SK-N-SH (cell line): ENCODE measurements at regions of chr9 and their contacts with region 1.

Region 1: DNA sequence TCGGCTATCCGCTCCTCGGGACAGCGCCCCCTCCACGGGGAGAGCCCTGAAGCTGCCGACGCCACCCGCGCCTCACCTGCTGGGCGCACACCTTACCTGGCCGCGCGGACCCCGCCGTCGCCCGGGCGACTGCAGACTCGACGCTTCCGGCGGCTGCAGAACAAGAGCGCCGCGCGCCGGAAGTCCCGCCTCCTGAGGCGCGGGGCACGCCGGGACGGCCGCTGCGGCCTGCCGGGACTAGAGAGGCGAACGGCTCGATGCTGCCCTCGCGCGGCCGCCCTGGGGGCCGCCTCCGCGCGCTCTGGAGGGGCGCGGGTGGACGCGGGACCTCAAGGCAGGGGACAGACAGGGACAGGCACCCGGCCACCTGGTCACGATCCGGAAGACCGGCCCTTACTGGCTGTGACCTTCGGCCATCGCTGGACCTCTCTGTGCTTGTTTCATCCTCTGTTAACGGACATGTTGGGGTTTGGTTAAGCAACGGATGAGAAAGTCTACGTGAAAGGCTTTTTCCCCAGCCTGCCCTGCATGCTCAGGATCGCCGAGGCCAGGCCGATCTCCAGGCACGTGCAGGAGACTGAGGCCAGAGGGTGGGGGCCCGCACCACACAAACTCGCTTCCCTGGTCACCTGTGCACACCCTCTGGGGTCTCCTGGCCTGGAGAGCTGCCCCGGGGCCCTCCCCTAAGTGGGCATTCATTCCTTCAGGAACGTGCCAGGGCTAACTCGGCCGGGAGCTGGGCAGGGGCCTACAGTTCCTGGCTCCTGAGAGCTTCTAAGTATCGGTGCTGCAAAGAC is at the start of gene SNAPC4:
- DNase-seq: peak; percentile 99
- H3K4me3 ChIP-seq: peak within 1 kb of the TSS; percentile 85 to 99
- H3K27ac ChIP-seq: peak within 1 kb of the TSS; percentile 30 to 73; a peak in 2 of 4 replicates
- H3K4me1 ChIP-seq: peaks cover 3 to 19% of the 10 kb centered on the region in 2 experiments; a peak in 2 of 4 replicates
- H3K27me3 ChIP-seq: no peaks in the 10 kb centered on the region
- CTCF ChIP-seq: peak; percentile 82
- EP300 ChIP-seq: peak in 1 of 2 experiments; percentile 19; a peak in 1 of 4 replicates
- RAD21 ChIP-seq: peak; percentile 76
- polyA plus RNA-seq, gene SNAPC4: 7.7 and 9.2 TPM in 2 replicates

Region 2: DNA sequence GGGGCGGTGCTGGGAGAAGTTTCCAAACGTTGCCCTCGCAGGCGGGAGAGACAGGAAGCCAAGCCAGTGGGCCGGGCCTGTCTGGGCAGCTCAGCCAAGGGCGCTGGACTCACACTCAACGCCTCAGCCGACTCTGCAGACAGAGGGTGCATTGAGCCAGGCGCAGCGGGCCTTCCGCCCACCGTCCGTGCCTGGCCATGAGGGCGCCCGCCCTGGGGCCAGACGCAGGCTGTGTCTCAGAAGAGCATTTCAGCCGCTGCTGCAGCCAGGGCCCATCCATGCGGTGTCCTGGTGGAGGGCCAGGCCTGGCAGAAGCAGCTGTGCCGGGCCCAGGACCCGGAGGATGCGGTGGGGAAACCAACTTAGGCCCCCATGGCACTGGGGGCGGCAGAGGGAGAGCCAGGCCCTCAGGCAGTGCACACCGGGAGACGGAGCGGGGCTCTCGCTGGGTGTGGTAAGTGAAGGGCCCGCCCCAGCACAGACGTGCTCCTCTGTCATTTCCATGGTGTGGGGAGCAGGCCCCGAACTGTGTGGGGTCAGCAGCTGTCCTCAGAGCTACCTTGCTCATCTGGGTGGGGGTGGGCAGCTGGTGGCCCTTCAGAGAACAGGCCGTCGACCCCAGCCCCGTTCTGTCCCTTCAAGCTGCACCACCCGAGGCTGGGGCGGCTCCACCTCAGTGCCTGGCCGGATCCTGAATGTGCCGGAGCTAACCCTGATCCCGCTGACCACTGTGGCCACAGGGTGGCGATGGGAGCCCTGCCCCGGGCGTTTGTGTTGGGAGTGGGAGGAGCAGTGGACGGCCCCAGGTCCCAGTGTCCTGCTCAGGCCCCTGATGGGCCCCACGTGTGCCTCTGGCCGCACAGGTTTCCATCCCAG is 54.7 kb before region 1 on chr9:
- CTCF ChIA-PET with region 1: interaction called, 14 read pairs
- POLR2A ChIA-PET with region 1: interaction called, 4 read pairs
- DNase-seq: peak; percentile 74
- H3K4me3 ChIP-seq: no peak overlapping the region
- H3K27ac ChIP-seq: peak overlapping the region in 1 of 2 experiments; percentile 58; a peak in 1 of 4 replicates
- H3K4me1 ChIP-seq: peaks cover 0 to 49% of the 10 kb centered on the region in 2 experiments; a peak in 1 of 4 replicates
- H3K27me3 ChIP-seq: no peaks in the 10 kb centered on the region
- CTCF ChIP-seq: peak; percentile 41
- EP300 ChIP-seq: no peak
- RAD21 ChIP-seq: peak; percentile 23

Region 3: DNA sequence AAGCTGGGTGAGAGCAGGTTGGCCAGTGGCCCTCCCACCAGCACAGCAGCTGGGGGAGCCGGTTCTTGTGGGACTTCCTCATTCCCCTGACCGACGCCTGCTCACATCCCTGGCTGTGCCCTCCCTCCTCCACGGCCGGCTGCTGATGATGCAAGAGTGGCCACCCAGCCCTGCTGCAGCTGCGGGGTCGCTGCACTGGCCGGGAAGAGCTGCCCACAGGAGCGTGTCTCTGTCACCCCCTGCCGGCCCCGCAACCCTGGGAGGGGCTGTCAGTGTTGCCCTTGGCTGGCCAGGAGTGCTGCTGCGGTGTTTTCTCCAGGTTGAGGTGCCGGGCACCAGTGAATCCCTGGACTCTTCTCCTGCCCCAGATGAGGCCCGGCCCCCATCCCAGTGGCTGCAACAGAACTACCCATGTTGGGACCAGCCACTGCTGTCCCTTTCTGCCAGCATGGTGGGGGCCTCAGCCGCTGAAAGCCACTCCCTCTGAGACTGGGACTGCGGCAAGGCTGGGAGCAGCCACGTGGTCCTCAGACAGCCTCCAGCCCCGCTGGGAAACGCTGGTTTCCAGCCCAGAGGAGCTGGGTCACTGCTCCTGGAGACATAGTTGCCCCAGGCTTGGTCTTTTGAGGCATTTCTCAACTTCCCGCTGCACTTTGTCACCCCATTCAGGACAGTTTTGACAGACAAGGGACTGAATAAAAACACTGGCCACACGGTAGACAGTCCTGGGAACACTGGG is 27.5 kb before region 1 on chr9:
- CTCF ChIA-PET with region 1: interaction called, 22 read pairs
- POLR2A ChIA-PET with region 1: interaction called, 21 read pairs
- DNase-seq: peak; percentile 84
- H3K4me3 ChIP-seq: peak overlapping the region in 1 of 2 experiments; percentile 21; a peak in 1 of 4 replicates
- H3K27ac ChIP-seq: peak overlapping the region in 1 of 2 experiments; percentile 90; a peak in 2 of 4 replicates
- H3K4me1 ChIP-seq: peaks cover 0 to 43% of the 10 kb centered on the region in 2 experiments; a peak in 1 of 4 replicates
- H3K27me3 ChIP-seq: no peaks in the 10 kb centered on the region
- CTCF ChIP-seq: peak; percentile 21; the same call in 1 of the 2 replicates
- EP300 ChIP-seq: no peak; a peak in 1 of 4 replicates
- RAD21 ChIP-seq: peak; percentile 59

Region 4: GRCh38 chr9:136410500-136411287 is 10.5 kb after region 1 on chr9 and contains the starts of genes ENTR1 and PMPCA:
- CTCF ChIA-PET with region 1: interaction called, 26 read pairs
- POLR2A ChIA-PET with region 1: interaction called, 4 read pairs
- DNase-seq: peak; percentile 99
- H3K4me3 ChIP-seq: peak within 1 kb of the TSS; percentile 92 to 98
- H3K27ac ChIP-seq: peak within 1 kb of the TSS; percentile 62 to 67; a peak in 3 of 4 replicates
- H3K4me1 ChIP-seq: peaks cover 16 to 24% of the 10 kb centered on the region in 2 experiments
- H3K27me3 ChIP-seq: no peaks in the 10 kb centered on the region
- CTCF ChIP-seq: no peak
- EP300 ChIP-seq: no peak
- RAD21 ChIP-seq: no peak
- polyA plus RNA-seq, gene ENTR1: 71.3 and 75.0 TPM in 2 replicates
- polyA plus RNA-seq, gene PMPCA: 125 and 134 TPM in 2 replicates